Caco-2 (cell line): ENCODE measurements at regions of chr16 and their contacts with region 1.

Region 1: GRCh38 chr16:89507834-89508590 is at the start of gene SPG7:
- DNase-seq: peak; percentile 87 to 96
- H3K4me3 ChIP-seq: peak within 1 kb of the TSS; percentile 50
- H3K4me3 Mint-ChIP-seq: peak within 1 kb of the TSS; percentile 95
- H3K27ac Mint-ChIP-seq: peak within 1 kb of the TSS; percentile 96
- H3K4me1 ChIP-seq: peaks cover 29% of the 10 kb centered on the region
- H3K4me1 Mint-ChIP-seq: peaks cover 9% of the 10 kb centered on the region
- H3K27me3 ChIP-seq: no peaks in the 10 kb centered on the region
- H3K27me3 Mint-ChIP-seq: no peaks in the 10 kb centered on the region
- CTCF ChIP-seq: no peak
- total RNA-seq, gene SPG7: 159 and 178 TPM in 2 replicates

Region 2: GRCh38 chr16:89020068-89020924 is 487.7 kb before region 1 on chr16:
- CTCF ChIA-PET with region 1: no interaction called
- POLR2A ChIA-PET with region 1: no interaction called
- intact Hi-C with region 1: no loop called
- DNase-seq: no peak
- H3K4me3 ChIP-seq: no peak overlapping the region
- H3K4me3 Mint-ChIP-seq: no peak overlapping the region
- H3K27ac Mint-ChIP-seq: no peak overlapping the region
- H3K4me1 ChIP-seq: no peaks in the 10 kb centered on the region
- H3K4me1 Mint-ChIP-seq: no peaks in the 10 kb centered on the region
- H3K27me3 ChIP-seq: peaks cover 1% of the 10 kb centered on the region
- H3K27me3 Mint-ChIP-seq: peaks cover 28% of the 10 kb centered on the region
- CTCF ChIP-seq: no peak

Region 3: GRCh38 chr16:89246903-89247733 is 260.9 kb before region 1 on chr16:
- CTCF ChIA-PET with region 1: interaction called, 10 read pairs
- POLR2A ChIA-PET with region 1: no interaction called
- intact Hi-C with region 1: loop called (anchors 5 kb)
- DNase-seq: peak; percentile 94 to 98
- H3K4me3 ChIP-seq: peak overlapping the region; percentile 63
- H3K4me3 Mint-ChIP-seq: peak overlapping the region; percentile 85
- H3K27ac Mint-ChIP-seq: peak overlapping the region; percentile 66
- H3K4me1 ChIP-seq: no peaks in the 10 kb centered on the region
- H3K4me1 Mint-ChIP-seq: no peaks in the 10 kb centered on the region
- H3K27me3 ChIP-seq: no peaks in the 10 kb centered on the region
- H3K27me3 Mint-ChIP-seq: no peaks in the 10 kb centered on the region
- CTCF ChIP-seq: no peak

Region 4: DNA sequence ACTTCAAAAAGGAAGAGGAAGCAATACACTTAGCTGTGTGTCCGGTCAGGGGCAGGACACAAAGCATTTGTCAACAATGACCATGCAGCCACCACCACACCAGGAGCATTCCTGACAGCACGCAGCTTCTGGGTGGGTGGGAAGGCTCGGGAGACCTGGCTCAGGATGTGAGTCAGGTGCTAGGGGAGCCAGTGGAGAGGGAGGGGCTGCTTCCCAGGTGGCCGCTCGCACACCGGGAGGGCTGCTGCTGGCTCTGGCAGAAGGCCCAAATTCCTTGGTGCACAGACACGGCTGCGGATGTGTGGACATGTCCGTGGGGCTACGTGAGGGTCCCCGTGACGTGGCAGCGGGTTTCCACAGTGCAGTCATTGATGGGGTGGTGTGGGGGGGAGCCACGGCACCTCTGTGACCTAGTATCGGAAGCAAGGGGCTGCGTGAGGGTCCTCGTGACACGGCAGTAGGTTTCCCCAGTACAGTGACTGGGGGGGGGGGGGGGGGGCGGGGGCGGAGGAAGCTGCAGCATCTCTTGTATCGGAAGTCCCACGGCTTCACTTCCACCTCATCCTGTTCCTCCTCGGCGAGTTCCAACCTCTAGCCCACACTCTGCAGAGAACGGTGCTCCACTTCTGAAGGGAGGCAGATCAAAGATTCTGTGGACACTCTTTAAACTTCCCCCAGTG is 177.7 kb before region 1 on chr16:
- CTCF ChIA-PET with region 1: interaction called, 5 read pairs
- POLR2A ChIA-PET with region 1: no interaction called
- intact Hi-C with region 1: loop called (anchors 5 kb)
- DNase-seq: peak in 1 of 2 experiments; percentile 54
- H3K4me3 ChIP-seq: no peak overlapping the region
- H3K4me3 Mint-ChIP-seq: no peak overlapping the region
- H3K27ac Mint-ChIP-seq: peak overlapping the region; percentile 30
- H3K4me1 ChIP-seq: peaks cover 28% of the 10 kb centered on the region
- H3K4me1 Mint-ChIP-seq: peaks cover 45% of the 10 kb centered on the region
- H3K27me3 ChIP-seq: no peaks in the 10 kb centered on the region
- H3K27me3 Mint-ChIP-seq: no peaks in the 10 kb centered on the region
- CTCF ChIP-seq: no peak

Region 5: DNA sequence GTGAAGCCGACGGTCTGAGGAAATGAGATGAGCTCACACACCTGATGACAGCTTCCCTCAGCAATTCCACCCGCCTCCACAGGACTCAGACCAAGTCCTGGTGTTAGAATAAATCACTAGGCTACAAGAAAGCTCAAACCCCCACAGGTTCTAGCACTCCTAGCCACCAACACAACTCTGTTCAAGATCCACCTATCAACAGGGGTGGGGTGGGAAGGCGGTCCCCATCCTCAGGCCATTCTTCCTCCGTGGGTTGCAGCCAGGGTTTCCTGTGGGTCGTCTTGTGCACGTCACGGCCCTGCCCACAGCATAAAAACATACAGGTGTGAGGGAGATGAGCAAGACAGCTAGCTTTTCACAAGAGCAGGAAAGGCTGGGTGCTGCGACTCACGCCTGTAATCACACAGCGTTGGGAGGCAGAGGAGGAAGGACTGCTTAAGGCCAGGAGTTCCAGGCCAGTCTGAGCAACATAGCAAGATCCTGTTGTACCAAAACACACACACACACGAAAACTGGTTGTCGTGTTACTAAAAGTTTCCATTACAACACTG is 98.8 kb before region 1 on chr16:
- CTCF ChIA-PET with region 1: no interaction called
- POLR2A ChIA-PET with region 1: no interaction called
- intact Hi-C with region 1: loop called (anchors 10 kb)
- DNase-seq: no peak
- H3K4me3 ChIP-seq: no peak overlapping the region
- H3K4me3 Mint-ChIP-seq: peak overlapping the region; percentile 14
- H3K27ac Mint-ChIP-seq: peak overlapping the region; percentile 81
- H3K4me1 ChIP-seq: peaks cover 79% of the 10 kb centered on the region
- H3K4me1 Mint-ChIP-seq: peaks cover 66% of the 10 kb centered on the region
- H3K27me3 ChIP-seq: no peaks in the 10 kb centered on the region
- H3K27me3 Mint-ChIP-seq: no peaks in the 10 kb centered on the region
- CTCF ChIP-seq: no peak

Region 6: GRCh38 chr16:89453501-89454321 is 54.3 kb before region 1 on chr16:
- CTCF ChIA-PET with region 1: no interaction called
- POLR2A ChIA-PET with region 1: no interaction called
- intact Hi-C with region 1: no loop called
- DNase-seq: no peak
- H3K4me3 ChIP-seq: no peak overlapping the region
- H3K4me3 Mint-ChIP-seq: no peak overlapping the region
- H3K27ac Mint-ChIP-seq: peak overlapping the region; percentile 0
- H3K4me1 ChIP-seq: peaks cover 16% of the 10 kb centered on the region; the same call in 1 of the 2 replicates
- H3K4me1 Mint-ChIP-seq: peaks cover 27% of the 10 kb centered on the region
- H3K27me3 ChIP-seq: no peaks in the 10 kb centered on the region
- H3K27me3 Mint-ChIP-seq: no peaks in the 10 kb centered on the region
- CTCF ChIP-seq: peak; percentile 20 to 25